PC-9 (cell line): ENCODE measurements at regions of chr6 and their contacts with region 1.

Region 1: GRCh38 chr6:31795616-31796298 is at the start of gene VARS1:
- DNase-seq: peak; percentile 89 to 96
- H3K4me3 ChIP-seq: peak within 1 kb of the TSS; percentile 86
- H3K27ac ChIP-seq: peak within 1 kb of the TSS; percentile 78
- H3K4me1 ChIP-seq: peaks cover 28% of the 10 kb centered on the region
- H3K27me3 ChIP-seq: no peaks in the 10 kb centered on the region
- CTCF ChIP-seq: peak; percentile 73
- total RNA-seq, gene VARS1: 99.6 and 124 TPM in 2 replicates

Region 2: DNA sequence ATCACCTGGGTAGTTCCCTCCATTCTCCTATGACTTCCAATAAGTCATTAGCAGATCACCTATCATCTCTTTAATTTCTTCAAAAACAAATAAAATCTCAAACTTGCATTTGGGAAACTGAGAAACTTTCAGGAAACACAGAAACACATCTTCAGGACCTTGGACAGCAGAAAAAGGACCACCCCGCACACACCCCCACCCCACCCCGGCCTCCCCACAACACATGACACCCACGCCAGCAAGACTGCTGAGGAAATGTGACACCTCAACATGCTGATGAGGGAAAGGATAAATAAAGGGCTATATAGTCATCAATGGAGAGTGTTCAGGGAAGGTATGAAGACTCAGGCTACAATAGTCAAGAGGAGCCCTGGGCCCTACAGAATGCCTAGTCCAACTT is 1484.7 kb before region 1 on chr6:
- CTCF ChIA-PET with region 1: no interaction called
- POLR2A ChIA-PET with region 1: no interaction called
- intact Hi-C with region 1: no loop called
- DNase-seq: no peak
- H3K4me3 ChIP-seq: no peak overlapping the region
- H3K27ac ChIP-seq: no peak overlapping the region
- H3K4me1 ChIP-seq: no peaks in the 10 kb centered on the region
- H3K27me3 ChIP-seq: no peaks in the 10 kb centered on the region
- CTCF ChIP-seq: no peak

Region 3: GRCh38 chr6:31729515-31729978 is 66.2 kb before region 1 on chr6:
- CTCF ChIA-PET with region 1: no interaction called
- POLR2A ChIA-PET with region 1: interaction called, 12 read pairs
- intact Hi-C with region 1: loop called (anchors 2 kb)
- DNase-seq: peak; percentile 78 to 91
- H3K4me3 ChIP-seq: peak overlapping the region; percentile 81
- H3K27ac ChIP-seq: no peak overlapping the region
- H3K4me1 ChIP-seq: peaks cover 15% of the 10 kb centered on the region
- H3K27me3 ChIP-seq: no peaks in the 10 kb centered on the region
- CTCF ChIP-seq: peak; percentile 6; the same call in 1 of the 2 replicates

Region 4: DNA sequence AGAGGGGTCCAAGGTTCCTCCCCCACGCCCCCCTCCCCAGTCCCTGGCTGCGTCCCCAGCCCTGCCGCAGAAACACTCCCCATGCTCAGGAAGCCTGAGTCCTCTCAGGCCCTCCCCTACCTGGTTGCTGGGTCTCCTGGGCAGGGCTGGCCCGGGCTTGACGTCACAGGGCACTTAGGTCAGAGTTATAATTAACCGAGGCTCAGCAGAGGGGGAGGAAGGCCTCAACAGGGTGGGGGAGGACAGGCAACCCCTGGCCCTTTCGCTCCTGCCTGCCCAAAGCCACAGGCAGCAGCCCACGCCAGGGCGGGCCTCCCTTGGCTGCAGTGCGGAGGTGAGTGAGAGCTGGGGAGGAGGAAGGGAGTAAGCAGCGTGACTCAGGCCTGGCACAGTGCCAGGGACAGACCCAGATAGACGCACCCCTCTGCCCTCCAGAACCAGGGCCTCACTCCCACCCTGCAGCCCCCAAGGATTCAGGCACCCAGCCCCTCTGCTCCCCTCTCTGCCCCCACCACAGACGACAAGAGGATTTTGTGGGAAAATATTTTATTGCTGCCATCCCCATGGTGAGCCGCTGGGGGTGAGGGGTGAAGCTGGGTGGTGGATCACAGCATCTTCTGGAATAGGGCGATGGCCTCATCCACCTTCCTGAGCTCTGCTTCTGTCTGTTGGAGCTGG is 18.6 kb before region 1 on chr6 and contains the start of gene VWA7:
- CTCF ChIA-PET with region 1: interaction called, 5 read pairs
- POLR2A ChIA-PET with region 1: interaction called, 3 read pairs
- intact Hi-C with region 1: loop called (anchors 2 kb)
- DNase-seq: peak; percentile 76 to 89
- H3K4me3 ChIP-seq: peak within 1 kb of the TSS; percentile 40; the same call in 1 of the 2 replicates
- H3K27ac ChIP-seq: peak within 1 kb of the TSS; percentile 58
- H3K4me1 ChIP-seq: peaks cover 31% of the 10 kb centered on the region
- H3K27me3 ChIP-seq: no peaks in the 10 kb centered on the region
- CTCF ChIP-seq: no peak
- total RNA-seq, gene VWA7: 6.0 and 9.6 TPM in 2 replicates

Region 5: GRCh38 chr6:31806465-31807272 is 10.9 kb after region 1 on chr6 and contains the start of gene LSM2:
- CTCF ChIA-PET with region 1: interaction called, 6 read pairs
- POLR2A ChIA-PET with region 1: interaction called, 12 read pairs
- intact Hi-C with region 1: no loop called
- DNase-seq: peak; percentile 82 to 97
- H3K4me3 ChIP-seq: peak within 1 kb of the TSS; percentile 93
- H3K27ac ChIP-seq: peak within 1 kb of the TSS; percentile 56
- H3K4me1 ChIP-seq: peaks cover 8% of the 10 kb centered on the region; the same call in 1 of the 2 replicates
- H3K27me3 ChIP-seq: no peaks in the 10 kb centered on the region
- CTCF ChIP-seq: peak; percentile 54
- total RNA-seq, gene LSM2: 67.5 and 74.3 TPM in 2 replicates

Region 6: DNA sequence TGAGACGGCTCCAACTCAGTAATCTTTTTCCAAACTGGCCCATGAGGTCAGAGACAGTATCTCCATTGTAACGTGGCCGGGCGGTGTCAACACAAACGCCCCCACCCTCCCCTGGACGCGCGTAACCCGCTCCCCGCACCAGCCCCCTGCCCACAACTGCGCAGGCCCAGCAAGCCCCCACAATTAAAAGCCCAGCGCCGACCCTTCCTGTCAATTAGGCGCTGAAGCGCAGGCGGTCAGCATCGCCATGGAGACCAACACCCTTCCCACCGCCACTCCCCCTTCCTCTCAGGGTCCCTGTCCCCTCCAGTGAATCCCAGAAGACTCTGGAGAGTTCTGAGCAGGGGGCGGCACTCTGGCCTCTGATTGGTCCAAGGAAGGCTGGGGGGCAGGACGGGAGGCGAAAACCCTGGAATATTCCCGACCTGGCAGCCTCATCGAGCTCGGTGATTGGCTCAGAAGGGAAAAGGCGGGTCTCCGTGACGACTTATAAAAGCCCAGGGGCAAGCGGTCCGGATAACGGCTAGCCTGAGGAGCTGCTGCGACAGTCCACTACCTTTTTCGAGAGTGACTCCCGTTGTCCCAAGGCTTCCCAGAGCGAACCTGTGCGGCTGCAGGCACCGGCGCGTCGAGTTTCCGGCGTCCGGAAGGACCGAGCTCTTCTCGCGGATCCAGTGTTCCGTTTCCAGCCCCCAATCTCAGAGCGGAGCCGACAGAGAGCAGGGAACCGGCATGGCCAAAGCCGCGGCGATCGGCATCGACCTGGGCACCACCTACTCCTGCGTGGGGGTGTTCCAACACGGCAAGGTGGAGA is 19.5 kb after region 1 on chr6 and contains the starts of genes HSPA1A and HSPA1L:
- CTCF ChIA-PET with region 1: interaction called, 4 read pairs
- POLR2A ChIA-PET with region 1: interaction called, 42 read pairs
- intact Hi-C with region 1: loop called (anchors 2 kb)
- DNase-seq: peak; percentile 94 to 97
- H3K4me3 ChIP-seq: peak within 1 kb of the TSS; percentile 84
- H3K27ac ChIP-seq: peak within 1 kb of the TSS; percentile 92
- H3K4me1 ChIP-seq: peaks cover 22% of the 10 kb centered on the region
- H3K27me3 ChIP-seq: no peaks in the 10 kb centered on the region
- CTCF ChIP-seq: no peak
- total RNA-seq, gene HSPA1A: 378 and 385 TPM in 2 replicates
- total RNA-seq, gene HSPA1L: 2.3 and 2.6 TPM in 2 replicates

Region 7: DNA sequence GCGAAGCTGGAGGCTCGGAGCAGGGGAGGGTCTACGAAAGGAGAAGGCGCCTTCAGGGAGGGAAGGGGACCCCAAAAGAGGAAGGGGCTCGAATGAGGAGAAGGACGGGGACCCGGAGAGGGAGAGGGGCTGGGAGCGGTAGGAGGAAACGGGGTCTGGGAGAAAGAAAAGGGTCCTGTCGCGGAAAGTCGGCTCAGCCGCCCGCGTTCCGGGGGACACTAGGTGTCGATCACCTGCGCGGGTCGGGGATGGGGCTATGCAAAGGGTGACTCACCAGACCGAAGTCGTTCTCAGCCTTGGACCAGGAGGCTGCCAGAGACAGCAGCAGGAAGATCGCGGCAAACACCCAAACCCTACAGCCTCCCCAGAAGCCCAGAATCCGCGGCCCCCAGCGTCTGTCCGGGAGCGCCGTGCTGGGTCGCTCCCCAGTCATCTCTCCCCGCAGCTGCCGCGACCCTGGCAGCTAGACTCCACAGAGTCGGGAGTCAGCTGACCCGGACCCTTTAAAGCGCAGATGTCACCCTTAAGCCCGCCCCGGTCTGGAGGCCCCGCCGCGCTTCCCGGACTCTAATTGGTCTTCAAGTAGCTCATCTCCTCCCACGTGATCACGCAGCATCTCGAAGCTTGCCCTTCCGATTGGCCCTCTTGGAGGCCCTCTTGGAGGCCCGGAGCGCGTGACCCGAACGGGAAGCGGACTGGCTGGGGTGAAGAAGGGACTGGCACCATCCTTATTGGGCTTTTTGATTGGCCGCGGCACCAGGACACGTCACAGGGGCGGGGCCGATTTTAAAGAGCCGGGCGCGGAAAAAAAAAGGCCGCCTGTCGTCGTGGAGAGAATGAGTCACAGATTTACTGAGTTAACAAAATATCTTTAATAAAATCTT is 66.8 kb after region 1 on chr6 and contains the start of gene NEU1:
- CTCF ChIA-PET with region 1: no interaction called
- POLR2A ChIA-PET with region 1: no interaction called
- intact Hi-C with region 1: loop called (anchors 2 kb)
- DNase-seq: peak; percentile 99 to 100
- H3K4me3 ChIP-seq: peak within 1 kb of the TSS; percentile 65
- H3K27ac ChIP-seq: peak within 1 kb of the TSS; percentile 70
- H3K4me1 ChIP-seq: peaks cover 23% of the 10 kb centered on the region
- H3K27me3 ChIP-seq: no peaks in the 10 kb centered on the region
- CTCF ChIP-seq: no peak
- total RNA-seq, gene NEU1: 23.1 and 23.4 TPM in 2 replicates

Region 8: GRCh38 chr6:32190054-32190851 is 394.5 kb after region 1 on chr6 and contains the start of gene PBX2:
- CTCF ChIA-PET with region 1: interaction called, 12 read pairs
- POLR2A ChIA-PET with region 1: no interaction called
- intact Hi-C with region 1: no loop called
- DNase-seq: peak; percentile 56 to 74
- H3K4me3 ChIP-seq: peak within 1 kb of the TSS; percentile 85
- H3K27ac ChIP-seq: peak within 1 kb of the TSS; percentile 30
- H3K4me1 ChIP-seq: peaks cover 19% of the 10 kb centered on the region
- H3K27me3 ChIP-seq: no peaks in the 10 kb centered on the region
- CTCF ChIP-seq: no peak
- total RNA-seq, gene PBX2: 88.2 and 89.3 TPM in 2 replicates